Esophagus muscularis mucosa (tissue), 4 donors: ENCODE measurements at regions of chr11 and their contacts with region 1.

Region 1: DNA sequence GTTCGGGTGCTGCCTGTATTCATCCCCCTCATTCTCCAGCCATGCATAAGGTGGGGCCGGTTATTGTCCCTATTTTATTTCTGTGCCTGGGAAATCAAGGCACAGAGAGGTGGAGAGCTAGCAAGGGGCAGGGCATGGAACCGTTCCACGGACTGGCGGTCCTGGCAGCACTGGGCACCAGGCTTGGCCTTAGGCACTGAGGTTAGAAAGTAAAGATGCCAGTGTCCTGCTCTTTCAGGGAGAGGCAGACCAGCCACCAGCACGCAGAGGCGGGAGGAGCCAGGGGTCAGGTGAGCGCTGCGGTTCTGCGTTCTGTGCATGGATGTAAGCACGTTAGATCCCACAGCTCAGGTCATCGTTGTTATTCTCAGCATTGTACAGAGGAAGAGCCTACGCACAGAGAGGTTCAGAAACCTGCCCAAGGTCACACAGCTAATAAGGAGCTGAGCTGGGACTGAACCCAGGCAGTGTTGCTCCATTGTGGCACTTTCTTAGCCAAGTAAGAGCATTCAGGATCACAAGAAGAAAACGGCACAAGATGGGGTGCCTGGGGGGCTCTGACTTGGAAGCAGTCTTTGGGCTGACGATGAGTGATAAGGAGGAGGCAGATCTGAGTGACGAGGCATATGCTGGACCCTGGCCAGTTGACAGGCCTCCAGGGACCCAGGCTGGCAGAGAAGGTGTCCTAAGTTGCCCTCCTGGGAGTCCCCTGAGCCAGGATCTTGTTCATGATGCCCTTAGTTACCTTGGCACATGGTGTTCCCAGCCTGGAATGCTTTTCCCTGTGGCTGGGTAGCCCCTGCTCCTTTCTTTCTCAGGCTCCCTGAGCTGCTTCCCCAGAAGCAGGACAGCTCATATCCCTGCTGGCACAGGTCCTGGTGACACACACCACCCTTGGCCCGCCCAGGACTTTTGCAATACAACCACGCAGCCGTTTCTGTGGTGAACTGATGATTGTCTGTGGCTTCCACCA is 41.1 kb downstream of the OSBPL5 start:
- DNase-seq: peak; percentile 97
- H3K4me3 ChIP-seq: no peak overlapping the region
- H3K27ac ChIP-seq: peak overlapping the region; percentile 78 to 85 (median 81)
- H3K4me1 ChIP-seq: peaks cover 36 to 62% (median 55%) of the 10 kb centered on the region in 4 donors
- H3K27me3 ChIP-seq: no peaks in the 10 kb centered on the region
- CTCF ChIP-seq: no peak
- EP300 ChIP-seq: peak; percentile 78
- POLR2A ChIP-seq: no peak

Region 2: GRCh38 chr11:2651826-2652271 is 472.2 kb before region 1 on chr11:
- intact Hi-C with region 1: no loop called
- DNase-seq: peak; percentile 34
- H3K4me3 ChIP-seq: no peak overlapping the region
- H3K27ac ChIP-seq: no peak overlapping the region
- H3K4me1 ChIP-seq: no peaks in the 10 kb centered on the region
- H3K27me3 ChIP-seq: no peaks in the 10 kb centered on the region
- CTCF ChIP-seq: no peak
- EP300 ChIP-seq: no peak
- POLR2A ChIP-seq: no peak

Region 3: DNA sequence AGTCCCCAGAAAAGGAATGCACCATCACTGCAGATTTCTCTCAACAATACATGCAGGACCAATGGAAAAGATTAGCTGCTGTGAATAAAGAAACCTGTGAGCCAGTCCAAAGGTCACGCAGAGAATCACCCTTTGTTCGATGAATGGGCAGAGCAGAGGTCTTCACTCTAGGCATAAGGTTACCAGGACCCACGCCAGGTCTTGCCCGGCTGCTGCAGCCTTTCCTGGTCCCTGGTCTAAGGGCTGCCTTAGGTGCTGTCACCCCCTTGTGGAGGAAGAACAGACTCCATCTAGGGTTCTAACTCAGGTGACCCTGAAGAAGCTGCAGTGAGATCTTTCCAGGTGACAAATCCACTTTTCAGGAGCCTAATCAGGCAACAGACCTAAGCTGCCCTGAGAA is 102.9 kb before region 1 on chr11:
- intact Hi-C with region 1: no loop called
- DNase-seq: no peak
- H3K4me3 ChIP-seq: no peak overlapping the region
- H3K27ac ChIP-seq: no peak overlapping the region
- H3K4me1 ChIP-seq: peaks cover 5 to 27% (median 20%) of the 10 kb centered on the region in 4 donors
- H3K27me3 ChIP-seq: no peaks in the 10 kb centered on the region
- CTCF ChIP-seq: peak; percentile 29 to 52 (median 48)
- EP300 ChIP-seq: no peak
- POLR2A ChIP-seq: no peak

Region 4: GRCh38 chr11:3146612-3147256 is 22.7 kb after region 1 on chr11:
- intact Hi-C with region 1: no loop called
- DNase-seq: no peak
- H3K4me3 ChIP-seq: no peak overlapping the region
- H3K27ac ChIP-seq: peak overlapping the region in 1 of 4 donors; percentile 60
- H3K4me1 ChIP-seq: peaks cover 45 to 86% (median 78%) of the 10 kb centered on the region in 4 donors
- H3K27me3 ChIP-seq: no peaks in the 10 kb centered on the region
- CTCF ChIP-seq: no peak
- EP300 ChIP-seq: no peak
- POLR2A ChIP-seq: no peak

Region 5: DNA sequence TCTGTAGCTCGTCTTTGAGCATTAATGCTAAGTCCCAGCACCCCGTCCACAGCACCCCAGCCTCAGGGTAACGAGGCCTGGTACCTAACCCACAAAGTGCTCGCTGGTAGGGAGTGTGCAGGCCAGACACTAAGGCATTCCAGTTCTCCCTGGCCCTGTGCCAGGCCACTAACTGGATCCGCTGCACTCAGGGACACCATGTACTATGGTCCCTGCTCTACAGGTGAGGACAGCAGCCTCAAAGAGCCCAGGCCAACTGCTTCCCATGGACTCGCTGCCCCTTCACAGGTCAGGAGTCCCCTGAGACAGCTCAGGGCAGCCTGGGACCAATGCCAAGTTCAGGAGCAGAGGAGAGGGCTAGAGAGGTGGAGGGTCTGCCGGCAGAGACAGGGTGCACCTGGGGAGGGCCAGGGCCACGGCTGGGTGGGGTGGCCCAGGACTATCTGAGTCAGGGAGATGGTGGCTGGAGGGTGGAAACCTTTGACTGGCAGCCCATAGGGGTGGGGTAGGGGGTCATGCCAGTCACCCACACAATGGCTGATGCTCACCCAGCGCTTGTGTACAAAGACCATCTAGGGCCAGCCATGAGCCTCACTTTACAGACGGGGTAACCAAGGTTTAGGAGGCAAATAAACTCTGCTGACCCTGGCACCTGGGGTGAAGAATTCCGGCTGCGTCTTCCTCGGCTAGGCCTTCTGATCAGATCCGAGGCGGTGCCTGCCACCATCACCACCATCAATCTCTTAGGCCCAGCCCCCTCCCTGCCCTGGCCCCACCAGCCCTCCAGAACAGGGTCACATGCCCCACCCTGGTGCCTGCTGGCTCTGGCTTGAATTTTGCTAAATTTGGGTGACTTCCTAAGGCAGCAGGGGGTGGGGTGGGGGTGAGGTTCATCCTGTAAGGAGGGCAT is 35.5 kb after region 1 on chr11:
- intact Hi-C with region 1: loop called (anchors 5 kb)
- DNase-seq: no peak
- H3K4me3 ChIP-seq: peak overlapping the region; percentile 57 to 70 (median 60)
- H3K27ac ChIP-seq: peak overlapping the region; percentile 87 to 94 (median 88)
- H3K4me1 ChIP-seq: peaks cover 83 to 99% (median 96%) of the 10 kb centered on the region in 4 donors
- H3K27me3 ChIP-seq: no peaks in the 10 kb centered on the region
- CTCF ChIP-seq: no peak
- EP300 ChIP-seq: peak; percentile 56
- POLR2A ChIP-seq: no peak

Region 6: GRCh38 chr11:3164979-3165814 is 41.1 kb after region 1 on chr11 and contains the start of gene OSBPL5:
- intact Hi-C with region 1: loop called (anchors 5 kb)
- DNase-seq: no peak
- H3K4me3 ChIP-seq: peak within 1 kb of the TSS; percentile 85 to 99 (median 96)
- H3K27ac ChIP-seq: peak within 1 kb of the TSS; percentile 86 to 94 (median 88)
- H3K4me1 ChIP-seq: peaks cover 63 to 75% (median 68%) of the 10 kb centered on the region in 4 donors
- H3K27me3 ChIP-seq: no peaks in the 10 kb centered on the region
- CTCF ChIP-seq: peak in 2 of 3 experiments; percentile 8 to 12
- EP300 ChIP-seq: no peak
- POLR2A ChIP-seq: no peak
- total RNA-seq, gene OSBPL5: 59.6 to 119 (median 71.7) TPM